ENCODE measurements at regions of chr11 and their contacts with region 1.

Region 1: DNA sequence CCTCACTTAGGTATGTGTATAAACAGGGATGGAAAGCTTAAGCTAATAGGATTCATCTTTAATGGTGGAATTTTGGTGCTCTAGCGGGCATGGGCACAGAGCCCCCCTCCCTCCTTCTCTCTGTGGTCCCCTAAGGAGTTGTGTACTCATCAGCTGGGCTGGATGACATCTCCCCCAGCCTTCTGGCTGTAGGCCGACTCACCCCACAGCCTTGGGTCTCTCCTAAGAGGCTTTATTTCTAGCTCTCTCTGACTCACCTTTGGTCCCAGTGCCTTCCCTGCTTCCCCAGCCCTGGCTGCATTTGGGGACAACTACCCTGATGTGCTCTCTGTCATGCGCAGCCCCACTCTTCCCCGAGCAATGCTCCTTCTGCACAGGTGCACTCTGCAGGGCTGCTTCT is 26.9 kb downstream of the SLC6A5 start:
- DNase-seq: no peak
- CTCF ChIP-seq: no peak

Region 2: GRCh38 chr11:20518323-20518834 is 107.9 kb before region 1 on chr11:
- CTCF ChIA-PET with region 1: no interaction called
- POLR2A ChIA-PET with region 1: no interaction called
- DNase-seq: no peak
- CTCF ChIP-seq: no peak

Region 3: GRCh38 chr11:20639688-20640087 is 13.4 kb after region 1 on chr11:
- CTCF ChIA-PET with region 1: interaction called, 13 read pairs
- POLR2A ChIA-PET with region 1: no interaction called
- DNase-seq: no peak
- CTCF ChIP-seq: no peak

Region 4: GRCh38 chr11:20647976-20648565 is 21.8 kb after region 1 on chr11:
- CTCF ChIA-PET with region 1: interaction called, 11 read pairs
- POLR2A ChIA-PET with region 1: no interaction called
- DNase-seq: peak; percentile 64
- CTCF ChIP-seq: peak; percentile 83